Esophagus muscularis mucosa (tissue), 4 donors: ENCODE measurements at regions of chr19 and their contacts with region 1.

Region 1: GRCh38 chr19:48290771-48291488 is 21.0 kb downstream of the ZNF114 start:
- DNase-seq: no peak
- H3K4me3 ChIP-seq: peak overlapping the region; percentile 41 to 58 (median 46)
- H3K27ac ChIP-seq: peak overlapping the region in 1 of 4 donors; percentile 46
- H3K4me1 ChIP-seq: peaks cover 8 to 18% (median 17%) of the 10 kb centered on the region in 4 donors
- H3K27me3 ChIP-seq: peaks cover 0 to 38% (median 0%) of the 10 kb centered on the region in 4 donors
- CTCF ChIP-seq: peak; percentile 96 to 99 (median 96)
- EP300 ChIP-seq: no peak
- POLR2A ChIP-seq: no peak

Region 2: GRCh38 chr19:48271531-48272151 is 19.3 kb before region 1 on chr19:
- intact Hi-C with region 1: loop called (anchors 1 kb)
- DNase-seq: no peak
- H3K4me3 ChIP-seq: peak overlapping the region; percentile 46 to 58 (median 48)
- H3K27ac ChIP-seq: peak overlapping the region in 2 of 4 donors; percentile 31 to 35
- H3K4me1 ChIP-seq: peaks cover 8 to 23% (median 18%) of the 10 kb centered on the region in 4 donors
- H3K27me3 ChIP-seq: peaks cover 0 to 61% (median 3%) of the 10 kb centered on the region in 4 donors
- CTCF ChIP-seq: no peak
- EP300 ChIP-seq: no peak
- POLR2A ChIP-seq: no peak